Transverse colon (tissue), 4 donors: ENCODE measurements at regions of chr10 and their contacts with region 1.

Region 1: GRCh38 chr10:121598207-121598862 is at the start of gene FGFR2:
- DNase-seq: peak; percentile 88
- H3K4me3 ChIP-seq: peak within 1 kb of the TSS; percentile 58 to 92 (median 78)
- H3K27ac ChIP-seq: peak within 1 kb of the TSS; percentile 86 to 94 (median 90)
- H3K4me1 ChIP-seq: peaks cover 0 to 24% (median 7%) of the 10 kb centered on the region in 4 donors
- H3K27me3 ChIP-seq: peaks cover 30% of the 10 kb centered on the region
- CTCF ChIP-seq: no peak
- EP300 ChIP-seq: no peak
- POLR2A ChIP-seq: peak; percentile 45
- total RNA-seq, gene FGFR2: 30.3 to 114 (median 87.9) TPM

Region 2: DNA sequence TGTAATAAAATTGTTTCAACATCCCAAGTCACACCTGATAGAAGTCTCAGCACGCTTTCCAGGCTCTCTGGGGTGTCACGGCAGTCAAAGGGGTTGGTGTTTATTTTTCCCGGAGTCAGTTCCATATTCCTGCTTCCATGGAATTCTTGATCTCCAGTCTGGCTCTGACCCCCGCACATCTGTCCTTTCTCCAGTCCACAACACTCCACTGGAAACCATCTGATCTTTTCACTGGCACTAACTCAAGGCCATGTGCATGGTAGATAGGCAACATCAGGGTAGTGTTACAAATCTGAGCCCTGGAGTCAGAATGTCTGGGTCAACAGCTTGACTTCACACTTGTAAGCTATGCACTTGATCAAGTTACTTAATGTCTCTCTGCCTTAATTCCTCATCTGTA is 571.0 kb before region 1 on chr10:
- in situ Hi-C with region 1: no loop called
- intact Hi-C with region 1: loop called (anchors 5 kb)
- DNase-seq: no peak
- H3K4me3 ChIP-seq: no peak overlapping the region
- H3K27ac ChIP-seq: peak overlapping the region in 2 of 4 donors; percentile 42 to 57
- H3K4me1 ChIP-seq: peaks cover 0 to 8% (median 0%) of the 10 kb centered on the region in 4 donors
- H3K27me3 ChIP-seq: no peaks in the 10 kb centered on the region
- CTCF ChIP-seq: no peak
- EP300 ChIP-seq: no peak
- POLR2A ChIP-seq: no peak

Region 3: DNA sequence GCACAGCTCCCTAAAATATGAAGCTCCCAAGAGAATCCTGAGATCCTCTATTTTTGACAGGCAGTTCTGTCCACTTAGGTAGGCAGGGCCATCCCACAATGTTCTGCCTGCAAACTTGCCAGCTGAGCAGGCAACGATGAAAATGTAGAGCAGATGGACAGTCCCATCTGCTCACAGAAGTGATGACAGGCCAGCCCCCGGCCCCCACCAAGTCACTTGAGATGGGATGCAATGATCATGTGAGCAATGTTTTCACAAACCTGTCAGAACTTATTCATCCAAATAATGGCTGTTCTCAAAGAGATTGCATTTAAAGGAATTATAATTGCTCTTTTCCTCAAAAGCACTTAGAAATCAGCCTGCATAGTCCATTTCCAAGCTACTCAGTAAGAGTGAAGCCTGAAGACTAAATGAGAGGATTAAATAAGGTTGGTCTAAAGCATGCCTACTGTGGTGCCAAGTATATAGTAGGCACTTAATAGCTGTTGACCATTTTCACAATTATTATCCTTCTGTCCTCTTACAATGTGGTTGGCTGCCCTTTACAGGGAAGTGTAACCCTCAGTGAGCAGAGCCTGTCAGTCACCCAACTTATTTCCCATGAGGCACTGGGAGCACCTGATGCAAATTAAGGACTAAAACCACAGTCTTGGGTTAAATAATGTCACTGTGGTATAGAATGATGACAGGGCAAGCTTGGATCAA is 301.3 kb before region 1 on chr10:
- in situ Hi-C with region 1: no loop called
- intact Hi-C with region 1: loop called (anchors 10 kb)
- DNase-seq: no peak
- H3K4me3 ChIP-seq: no peak overlapping the region
- H3K27ac ChIP-seq: no peak overlapping the region
- H3K4me1 ChIP-seq: peaks cover 8 to 35% (median 15%) of the 10 kb centered on the region in 4 donors
- H3K27me3 ChIP-seq: no peaks in the 10 kb centered on the region
- CTCF ChIP-seq: no peak
- EP300 ChIP-seq: no peak
- POLR2A ChIP-seq: no peak

Region 4: DNA sequence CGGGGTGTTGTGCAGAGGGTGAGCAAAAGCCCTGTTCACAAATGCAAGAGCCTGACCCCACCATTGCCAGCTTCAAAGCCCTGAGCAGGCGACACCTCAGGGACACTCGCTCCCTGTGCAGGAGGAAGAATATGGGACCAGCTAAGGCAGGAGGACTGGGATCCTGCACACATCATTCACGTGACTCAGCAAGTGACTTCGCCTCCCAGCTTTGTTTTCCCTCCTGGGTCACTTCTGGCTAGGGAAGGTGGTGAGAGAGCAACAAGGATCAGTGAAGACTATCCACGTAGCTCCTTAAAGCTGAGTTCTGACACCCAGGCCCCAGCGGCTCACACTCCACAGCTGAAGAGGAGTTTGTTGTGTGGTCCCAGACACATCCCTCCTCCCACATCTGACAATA is 164.4 kb before region 1 on chr10:
- in situ Hi-C with region 1: no loop called
- intact Hi-C with region 1: loop called (anchors 5 kb)
- DNase-seq: no peak
- H3K4me3 ChIP-seq: no peak overlapping the region
- H3K27ac ChIP-seq: no peak overlapping the region
- H3K4me1 ChIP-seq: peaks cover 0 to 12% (median 7%) of the 10 kb centered on the region in 4 donors
- H3K27me3 ChIP-seq: no peaks in the 10 kb centered on the region
- CTCF ChIP-seq: no peak
- EP300 ChIP-seq: no peak
- POLR2A ChIP-seq: no peak

Region 5: GRCh38 chr10:121527666-121528065 is 70.7 kb before region 1 on chr10:
- in situ Hi-C with region 1: no loop called
- intact Hi-C with region 1: loop called (anchors 10 kb)
- DNase-seq: peak; percentile 28
- H3K4me3 ChIP-seq: no peak overlapping the region
- H3K27ac ChIP-seq: peak overlapping the region; percentile 34 to 75 (median 69)
- H3K4me1 ChIP-seq: peaks cover 14 to 44% (median 33%) of the 10 kb centered on the region in 4 donors
- H3K27me3 ChIP-seq: no peaks in the 10 kb centered on the region
- CTCF ChIP-seq: no peak
- EP300 ChIP-seq: no peak
- POLR2A ChIP-seq: no peak

Region 6: GRCh38 chr10:122034149-122034756 is 435.9 kb after region 1 on chr10:
- in situ Hi-C with region 1: no loop called
- intact Hi-C with region 1: no loop called
- DNase-seq: peak; percentile 26
- H3K4me3 ChIP-seq: no peak overlapping the region
- H3K27ac ChIP-seq: peak overlapping the region; percentile 75 to 81 (median 78)
- H3K4me1 ChIP-seq: peaks cover 14 to 30% (median 19%) of the 10 kb centered on the region in 4 donors
- H3K27me3 ChIP-seq: no peaks in the 10 kb centered on the region
- CTCF ChIP-seq: no peak
- EP300 ChIP-seq: no peak
- POLR2A ChIP-seq: no peak